Natural killer cell (primary cell): ENCODE measurements at regions of chr10 and their contacts with region 1.

Region 1: DNA sequence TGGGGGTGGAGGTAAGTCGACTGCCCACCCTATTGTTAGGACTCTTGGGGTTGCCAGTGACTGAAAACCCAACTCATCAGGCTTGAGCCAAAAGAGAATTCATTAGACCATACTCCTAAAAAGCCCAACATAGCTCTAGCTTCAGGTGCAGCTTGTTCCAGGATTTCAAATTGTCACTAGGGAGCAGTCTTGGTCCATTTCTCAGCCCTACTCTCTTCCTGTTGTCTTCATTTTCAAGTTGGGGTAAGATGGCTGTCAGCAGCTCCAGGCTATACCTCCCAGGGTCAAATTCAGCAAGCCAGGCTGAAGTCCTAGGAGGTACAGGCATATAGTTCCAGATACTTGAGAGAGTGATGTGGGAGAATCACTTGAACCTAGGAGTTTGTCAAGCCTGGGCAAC is 14.9 kb upstream of the COL13A1 start:
- DNase-seq: peak in 1 of 2 donors; percentile 17
- ATAC-seq: peak; percentile 59 to 92 (median 92)
- H3K4me3 ChIP-seq: no peak overlapping the region
- H3K4me3 Mint-ChIP-seq: no peak overlapping the region
- H3K27ac ChIP-seq: no peak overlapping the region
- H3K27ac Mint-ChIP-seq: peak overlapping the region in 1 of 2 donors; percentile 78
- H3K4me1 ChIP-seq: peaks cover 5% of the 10 kb centered on the region
- H3K4me1 Mint-ChIP-seq: peaks cover 14 to 15% of the 10 kb centered on the region in 2 donors
- H3K27me3 ChIP-seq: peaks cover 2% of the 10 kb centered on the region
- H3K27me3 Mint-ChIP-seq: peaks cover 0 to 2% of the 10 kb centered on the region in 2 donors
- CTCF ChIP-seq: peak; percentile 53

Region 2: GRCh38 chr10:69839696-69840345 is 53.0 kb after region 1 on chr10:
- intact Hi-C with region 1: no loop called
- DNase-seq: no peak
- ATAC-seq: peak in 2 of 3 donors; percentile 34 to 56
- H3K4me3 ChIP-seq: no peak overlapping the region
- H3K4me3 Mint-ChIP-seq: peak overlapping the region; percentile 54
- H3K27ac ChIP-seq: no peak overlapping the region
- H3K27ac Mint-ChIP-seq: peak overlapping the region; percentile 47 to 73
- H3K4me1 ChIP-seq: peaks cover 38% of the 10 kb centered on the region
- H3K4me1 Mint-ChIP-seq: peaks cover 48 to 69% of the 10 kb centered on the region in 2 donors
- H3K27me3 ChIP-seq: no peaks in the 10 kb centered on the region
- H3K27me3 Mint-ChIP-seq: no peaks in the 10 kb centered on the region
- CTCF ChIP-seq: no peak

Region 3: GRCh38 chr10:69957886-69958555 is 171.2 kb after region 1 on chr10:
- intact Hi-C with region 1: loop called (anchors 1 kb)
- DNase-seq: peak in 1 of 2 donors; percentile 51
- ATAC-seq: peak; percentile 65 to 92 (median 85)
- H3K4me3 ChIP-seq: no peak overlapping the region
- H3K4me3 Mint-ChIP-seq: no peak overlapping the region
- H3K27ac ChIP-seq: no peak overlapping the region
- H3K27ac Mint-ChIP-seq: no peak overlapping the region
- H3K4me1 ChIP-seq: peaks cover 12% of the 10 kb centered on the region
- H3K4me1 Mint-ChIP-seq: peaks cover 0 to 9% of the 10 kb centered on the region in 2 donors
- H3K27me3 ChIP-seq: no peaks in the 10 kb centered on the region
- H3K27me3 Mint-ChIP-seq: peaks cover 0 to 3% of the 10 kb centered on the region in 2 donors
- CTCF ChIP-seq: peak; percentile 83